A549 (cell line): ENCODE measurements at regions of chr20 and their contacts with region 1.

Region 1: GRCh38 chr20:21615617-21616080 is 89.8 kb upstream of the PAX1 start:
- DNase-seq: peak; percentile 71 to 73
- ATAC-seq: peak; percentile 88 to 98
- H3K4me3 ChIP-seq: no peak overlapping the region
- H3K27ac ChIP-seq: no peak overlapping the region
- H3K4me1 ChIP-seq: no peaks in the 10 kb centered on the region
- CTCF ChIP-seq: peak; percentile 84
- EP300 ChIP-seq: no peak
- POLR2A ChIP-seq: no peak
- RAD21 ChIP-seq: peak; percentile 77 to 87

Region 2: GRCh38 chr20:20860078-20860806 is 755.4 kb before region 1 on chr20:
- CTCF ChIA-PET with region 1: interaction called, 40 read pairs
- POLR2A ChIA-PET with region 1: no interaction called
- DNase-seq: peak; percentile 87 to 92
- ATAC-seq: peak; percentile 93 to 97
- H3K4me3 ChIP-seq: no peak overlapping the region
- H3K27ac ChIP-seq: no peak overlapping the region
- H3K4me1 ChIP-seq: no peaks in the 10 kb centered on the region
- CTCF ChIP-seq: peak; percentile 95
- EP300 ChIP-seq: no peak
- POLR2A ChIP-seq: no peak
- RAD21 ChIP-seq: peak; percentile 81 to 88

Region 3: DNA sequence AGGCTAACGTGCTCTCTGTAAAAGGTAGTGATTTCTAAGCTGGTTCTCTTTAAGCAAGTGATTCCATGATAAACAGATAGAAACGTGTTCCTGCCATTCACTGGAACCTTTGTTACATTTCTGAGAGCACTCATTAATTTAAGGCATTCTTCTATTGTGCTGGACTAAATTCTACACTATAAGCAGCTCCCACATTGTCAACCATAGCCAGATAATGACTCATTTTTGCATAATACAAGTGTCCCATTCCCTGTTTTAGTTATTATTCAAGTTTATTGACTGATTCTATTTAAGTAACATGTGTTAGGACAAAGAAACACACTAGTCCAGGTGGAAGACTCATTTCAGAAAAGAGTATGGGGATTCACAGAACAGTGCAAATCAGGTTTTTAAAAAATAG is 326.0 kb before region 1 on chr20:
- CTCF ChIA-PET with region 1: no interaction called
- POLR2A ChIA-PET with region 1: no interaction called
- DNase-seq: no peak
- ATAC-seq: no peak
- H3K4me3 ChIP-seq: no peak overlapping the region
- H3K27ac ChIP-seq: no peak overlapping the region
- H3K4me1 ChIP-seq: no peaks in the 10 kb centered on the region
- CTCF ChIP-seq: no peak
- EP300 ChIP-seq: no peak
- POLR2A ChIP-seq: no peak
- RAD21 ChIP-seq: no peak

Region 4: GRCh38 chr20:21571841-21572690 is 43.6 kb before region 1 on chr20:
- CTCF ChIA-PET with region 1: interaction called, 14 read pairs
- POLR2A ChIA-PET with region 1: no interaction called
- DNase-seq: no peak
- ATAC-seq: peak in 1 of 2 experiments; percentile 45; a peak in 2 of 6 replicates
- H3K4me3 ChIP-seq: no peak overlapping the region
- H3K27ac ChIP-seq: no peak overlapping the region
- H3K4me1 ChIP-seq: no peaks in the 10 kb centered on the region
- CTCF ChIP-seq: peak; percentile 88
- EP300 ChIP-seq: no peak
- POLR2A ChIP-seq: no peak
- RAD21 ChIP-seq: peak; percentile 77 to 81

Region 5: DNA sequence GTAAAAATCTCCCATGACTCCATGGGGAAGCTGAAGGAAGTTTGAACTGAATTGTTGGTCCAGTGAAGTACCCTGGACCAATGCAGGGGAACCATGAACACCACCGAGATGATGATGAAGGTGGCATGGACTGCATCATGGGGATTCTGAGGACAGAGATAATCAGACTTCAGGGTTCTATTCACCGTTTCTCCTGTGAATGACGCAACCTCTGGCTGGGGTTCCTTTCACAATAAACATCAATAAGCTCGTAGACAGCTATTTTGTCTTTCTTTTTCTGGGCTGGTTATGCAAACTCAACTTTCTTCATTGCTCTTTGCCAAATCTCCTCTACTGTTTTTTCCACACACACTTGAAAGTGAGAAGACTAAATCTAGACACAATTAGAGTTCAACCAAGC is 13.8 kb before region 1 on chr20:
- CTCF ChIA-PET with region 1: interaction called, 29 read pairs
- POLR2A ChIA-PET with region 1: no interaction called
- DNase-seq: no peak
- ATAC-seq: no peak
- H3K4me3 ChIP-seq: no peak overlapping the region
- H3K27ac ChIP-seq: no peak overlapping the region
- H3K4me1 ChIP-seq: no peaks in the 10 kb centered on the region
- CTCF ChIP-seq: no peak
- EP300 ChIP-seq: no peak
- POLR2A ChIP-seq: no peak
- RAD21 ChIP-seq: no peak